ENCODE measurements at regions of chr16 and their contacts with region 1.

Region 1: GRCh38 chr16:2513405-2514322 is at the start of gene ATP6V0C:
- DNase-seq: peak; percentile 89
- H3K4me3 Mint-ChIP-seq: peak within 1 kb of the TSS; percentile 90
- H3K27ac Mint-ChIP-seq: peak within 1 kb of the TSS; percentile 91
- H3K4me1 Mint-ChIP-seq: peaks cover 49% of the 10 kb centered on the region
- H3K27me3 Mint-ChIP-seq: no peaks in the 10 kb centered on the region
- total RNA-seq, gene ATP6V0C: 81.9 TPM

Region 2: GRCh38 chr16:2223375-2224182 is 290.1 kb before region 1 on chr16 and contains the start of gene E4F1:
- CTCF ChIA-PET with region 1: no interaction called
- intact Hi-C with region 1: loop called (anchors 1 kb)
- DNase-seq: peak; percentile 100
- H3K4me3 Mint-ChIP-seq: peak within 1 kb of the TSS; percentile 78
- H3K27ac Mint-ChIP-seq: peak within 1 kb of the TSS; percentile 18
- H3K4me1 Mint-ChIP-seq: peaks cover 22% of the 10 kb centered on the region
- H3K27me3 Mint-ChIP-seq: no peaks in the 10 kb centered on the region
- total RNA-seq, gene E4F1: 21.2 to 21.7 TPM

Region 3: DNA sequence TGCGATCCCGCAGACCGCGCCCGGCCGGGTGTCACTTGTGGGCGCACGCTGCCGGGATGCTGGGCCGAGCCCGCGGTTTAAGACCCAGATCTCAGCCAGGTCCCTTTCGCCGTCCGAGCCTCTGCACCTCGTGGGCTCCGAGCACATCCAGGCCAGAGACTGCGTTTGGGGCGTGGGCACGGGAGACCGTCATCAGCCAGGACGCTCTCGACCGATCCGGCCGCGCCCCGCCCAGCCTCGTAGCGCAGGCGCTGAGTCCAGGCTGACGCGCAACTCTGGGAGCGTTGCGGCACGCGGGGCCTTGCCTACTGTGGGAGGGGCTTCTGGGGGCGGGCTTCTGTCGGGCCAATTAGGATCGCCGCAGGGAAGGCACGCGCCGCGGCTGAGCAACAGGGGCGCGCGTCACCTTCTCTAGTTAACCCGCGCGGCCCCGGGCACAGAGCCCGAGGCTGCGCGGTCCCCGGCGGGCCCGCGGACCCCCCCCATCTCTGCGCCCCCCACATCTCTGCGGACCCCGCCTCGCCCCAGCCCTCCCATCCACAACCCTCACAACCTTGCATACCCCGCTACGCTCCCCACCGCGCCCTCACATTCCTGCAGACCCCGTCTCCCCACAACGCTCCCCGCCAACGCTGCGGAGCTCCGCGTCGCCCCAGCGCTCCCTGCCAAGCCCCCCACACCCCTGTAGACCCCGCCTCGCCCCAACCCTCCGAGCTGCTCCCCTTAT is 18.3 kb after region 1 on chr16:
- CTCF ChIA-PET with region 1: no interaction called
- intact Hi-C with region 1: loop called (anchors 1 kb)
- DNase-seq: peak; percentile 99
- H3K4me3 Mint-ChIP-seq: peak overlapping the region; percentile 92
- H3K27ac Mint-ChIP-seq: peak overlapping the region; percentile 97
- H3K4me1 Mint-ChIP-seq: peaks cover 16% of the 10 kb centered on the region
- H3K27me3 Mint-ChIP-seq: no peaks in the 10 kb centered on the region

Region 4: DNA sequence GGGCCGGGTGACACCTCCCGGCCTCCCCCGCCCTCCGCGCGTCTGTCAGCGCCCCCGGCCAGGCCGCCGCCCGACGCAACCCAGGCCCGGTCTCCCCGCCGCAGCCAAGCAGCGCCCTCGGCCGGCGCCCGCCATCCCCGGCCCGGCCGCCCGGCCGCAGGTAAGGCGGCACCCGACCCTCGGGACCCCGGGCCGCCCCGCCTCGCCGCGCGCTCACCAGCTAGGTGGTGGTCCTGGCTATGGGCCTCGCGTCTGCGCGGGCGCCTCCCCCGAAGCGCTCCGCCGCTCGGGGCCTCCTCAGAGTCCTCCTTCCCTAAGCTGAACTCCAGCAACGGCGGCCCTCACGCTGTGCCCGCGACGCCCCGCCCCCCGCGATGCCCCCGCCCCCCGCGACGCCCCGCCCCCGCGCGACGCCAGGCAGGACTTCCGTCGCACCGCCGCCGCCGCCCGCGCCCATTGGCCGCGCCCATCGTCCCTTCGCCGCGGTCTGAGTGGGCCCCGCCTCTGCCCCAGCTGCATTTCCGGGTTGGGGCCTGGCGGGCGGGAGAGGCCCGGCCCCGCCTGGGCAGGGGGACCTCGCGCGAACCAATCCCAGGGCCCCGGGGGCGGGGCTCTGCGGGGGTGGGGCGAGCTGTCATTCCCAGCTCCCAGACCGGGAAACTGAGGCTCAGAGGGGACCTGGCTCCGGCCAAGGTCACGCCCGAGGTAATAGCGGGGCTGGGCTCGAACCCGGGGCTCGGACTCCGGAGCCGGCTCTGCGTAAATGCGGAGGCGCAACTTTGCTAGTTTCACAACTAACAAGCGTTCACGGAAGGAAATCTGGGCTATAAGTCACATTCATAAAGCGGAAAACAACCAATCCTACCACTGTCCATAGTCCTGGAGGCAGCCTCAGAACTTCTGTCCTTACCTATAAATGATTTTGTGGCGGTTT is 159.7 kb after region 1 on chr16:
- CTCF ChIA-PET with region 1: no interaction called
- intact Hi-C with region 1: loop called (anchors 5 kb)
- DNase-seq: peak; percentile 95
- H3K4me3 Mint-ChIP-seq: peak overlapping the region; percentile 78
- H3K27ac Mint-ChIP-seq: peak overlapping the region; percentile 56
- H3K4me1 Mint-ChIP-seq: peaks cover 36% of the 10 kb centered on the region
- H3K27me3 Mint-ChIP-seq: no peaks in the 10 kb centered on the region

Region 5: DNA sequence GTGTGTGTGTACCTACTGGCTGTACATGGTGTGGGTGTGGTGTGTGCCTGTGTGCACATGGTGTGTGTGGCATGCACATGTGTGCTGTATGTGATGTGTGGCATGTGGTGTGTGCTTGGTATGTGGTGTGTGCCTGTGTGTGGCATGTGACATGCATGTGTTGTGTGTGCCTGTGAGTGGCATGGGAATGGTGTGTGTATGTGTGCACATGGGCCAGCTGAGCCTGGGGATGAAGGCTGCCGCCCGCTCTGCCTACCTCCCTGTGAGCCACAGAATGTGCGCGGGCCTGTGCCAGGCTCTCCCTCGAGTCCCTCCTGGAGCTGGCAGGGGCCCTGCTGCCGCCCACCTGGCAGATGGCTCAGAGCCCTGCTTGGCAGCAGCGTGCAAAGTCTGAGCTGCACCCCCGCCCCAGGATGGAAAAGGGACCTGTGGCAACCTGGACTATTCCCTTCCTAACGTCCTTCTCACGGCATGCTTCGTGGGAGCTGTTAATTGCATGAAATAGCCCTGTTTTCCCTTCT is 197.1 kb after region 1 on chr16:
- CTCF ChIA-PET with region 1: no interaction called
- intact Hi-C with region 1: no loop called
- DNase-seq: no peak
- H3K4me3 Mint-ChIP-seq: no peak overlapping the region
- H3K27ac Mint-ChIP-seq: no peak overlapping the region
- H3K4me1 Mint-ChIP-seq: peaks cover 4% of the 10 kb centered on the region
- H3K27me3 Mint-ChIP-seq: no peaks in the 10 kb centered on the region

Region 6: DNA sequence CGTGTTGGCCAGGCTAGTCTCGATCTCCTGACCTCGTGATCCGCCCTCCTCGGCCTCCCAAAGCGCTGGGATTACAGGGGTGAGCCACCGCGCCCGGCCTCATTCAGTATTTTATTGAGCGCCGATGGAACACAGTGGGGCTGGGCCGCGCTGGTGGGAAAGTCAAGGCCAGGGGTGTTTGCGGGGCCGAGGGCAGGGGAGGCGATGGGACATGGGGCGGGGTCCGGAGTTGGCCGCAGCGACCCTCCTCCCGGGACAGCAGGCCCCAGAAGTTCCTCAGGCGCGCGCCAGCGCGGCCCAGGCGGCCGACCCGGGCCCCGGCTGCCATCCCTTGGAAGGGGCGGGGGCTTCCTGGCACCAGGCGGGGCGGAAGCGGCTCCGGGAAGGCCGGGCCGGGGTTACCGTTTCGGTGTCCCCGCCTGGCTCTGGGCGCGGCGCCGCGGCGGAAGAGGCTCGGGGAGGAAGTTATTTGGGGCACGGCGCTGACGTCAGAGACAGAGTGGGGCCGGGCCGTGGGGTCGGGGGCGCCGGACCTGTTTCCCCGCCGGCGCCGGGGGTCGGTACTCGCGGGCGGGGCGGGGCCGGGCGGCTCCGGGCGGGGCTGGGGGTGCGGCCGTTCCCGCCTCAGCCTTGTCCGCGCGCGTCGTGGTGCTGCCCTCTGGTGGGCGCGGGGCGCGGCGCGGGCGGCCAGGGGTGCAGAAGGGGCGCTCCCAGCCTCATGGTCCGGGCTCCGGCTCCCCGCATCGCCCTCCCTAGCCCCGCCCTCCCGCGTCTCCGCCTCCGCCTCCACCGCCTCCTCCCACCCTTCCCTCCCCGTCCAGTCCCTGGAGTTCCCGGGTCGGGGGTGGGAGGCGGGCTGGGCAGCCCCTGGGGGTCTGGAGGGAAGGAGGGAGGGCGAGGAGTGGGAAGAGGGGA is 207.3 kb after region 1 on chr16:
- CTCF ChIA-PET with region 1: no interaction called
- intact Hi-C with region 1: loop called (anchors 5 kb)
- DNase-seq: peak; percentile 92
- H3K4me3 Mint-ChIP-seq: peak overlapping the region; percentile 82
- H3K27ac Mint-ChIP-seq: peak overlapping the region; percentile 85
- H3K4me1 Mint-ChIP-seq: no peaks in the 10 kb centered on the region
- H3K27me3 Mint-ChIP-seq: peaks cover 2% of the 10 kb centered on the region